ENCODE measurements at regions of chr7 and their contacts with region 1.

Region 1: GRCh38 chr7:27576360-27576944 is 86.2 kb downstream of the HIBADH start:
- DNase-seq: no peak
- H3K4me3 ChIP-seq: no peak overlapping the region
- H3K27ac ChIP-seq: no peak overlapping the region
- H3K4me1 ChIP-seq: peaks cover 0 to 4% (median 0%) of the 10 kb centered on the region in 6 donors
- H3K27me3 ChIP-seq: no peaks in the 10 kb centered on the region
- CTCF ChIP-seq: peak in 9 of 11 experiments; percentile 16 to 70 (median 60)
- POLR2A ChIP-seq: no peak

Region 2: DNA sequence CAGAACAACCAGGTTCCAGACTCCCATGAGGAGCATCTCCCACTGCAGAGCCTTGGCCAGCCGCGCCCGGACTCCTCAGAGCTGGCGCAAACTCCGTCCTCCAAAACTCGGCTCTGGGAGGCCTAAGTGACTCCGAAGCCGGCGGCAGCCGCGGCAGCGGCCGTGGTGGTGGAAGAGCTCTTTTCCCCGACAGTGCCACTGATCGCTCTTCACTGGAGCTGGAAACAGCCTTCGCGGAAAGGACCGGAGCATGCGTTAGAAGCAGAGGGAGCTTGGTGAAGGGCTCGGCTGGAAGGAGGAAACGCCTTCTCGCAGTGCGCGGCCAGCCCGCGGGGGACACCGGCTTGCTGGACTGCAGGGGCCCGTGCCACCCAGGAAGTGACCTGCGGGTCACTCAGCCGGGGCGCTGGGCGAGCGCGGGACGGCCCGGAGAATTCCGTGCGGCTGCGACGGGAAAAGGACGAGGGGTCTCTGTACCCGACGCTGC is 371.6 kb before region 1 on chr7:
- intact Hi-C with region 1: loop called (anchors 5 kb)
- DNase-seq: peak; percentile 77
- H3K4me3 ChIP-seq: peak overlapping the region in 2 of 8 donors; percentile 22 to 36
- H3K27ac ChIP-seq: no peak overlapping the region
- H3K4me1 ChIP-seq: peaks cover 12 to 53% (median 39%) of the 10 kb centered on the region in 6 donors
- H3K27me3 ChIP-seq: peaks cover 21 to 100% (median 96%) of the 10 kb centered on the region in 7 donors
- CTCF ChIP-seq: no peak
- POLR2A ChIP-seq: no peak

Measured in spleen (tissue), 13 donors.